ENCODE measurements at regions of chr22 and their contacts with region 1.

Region 1: DNA sequence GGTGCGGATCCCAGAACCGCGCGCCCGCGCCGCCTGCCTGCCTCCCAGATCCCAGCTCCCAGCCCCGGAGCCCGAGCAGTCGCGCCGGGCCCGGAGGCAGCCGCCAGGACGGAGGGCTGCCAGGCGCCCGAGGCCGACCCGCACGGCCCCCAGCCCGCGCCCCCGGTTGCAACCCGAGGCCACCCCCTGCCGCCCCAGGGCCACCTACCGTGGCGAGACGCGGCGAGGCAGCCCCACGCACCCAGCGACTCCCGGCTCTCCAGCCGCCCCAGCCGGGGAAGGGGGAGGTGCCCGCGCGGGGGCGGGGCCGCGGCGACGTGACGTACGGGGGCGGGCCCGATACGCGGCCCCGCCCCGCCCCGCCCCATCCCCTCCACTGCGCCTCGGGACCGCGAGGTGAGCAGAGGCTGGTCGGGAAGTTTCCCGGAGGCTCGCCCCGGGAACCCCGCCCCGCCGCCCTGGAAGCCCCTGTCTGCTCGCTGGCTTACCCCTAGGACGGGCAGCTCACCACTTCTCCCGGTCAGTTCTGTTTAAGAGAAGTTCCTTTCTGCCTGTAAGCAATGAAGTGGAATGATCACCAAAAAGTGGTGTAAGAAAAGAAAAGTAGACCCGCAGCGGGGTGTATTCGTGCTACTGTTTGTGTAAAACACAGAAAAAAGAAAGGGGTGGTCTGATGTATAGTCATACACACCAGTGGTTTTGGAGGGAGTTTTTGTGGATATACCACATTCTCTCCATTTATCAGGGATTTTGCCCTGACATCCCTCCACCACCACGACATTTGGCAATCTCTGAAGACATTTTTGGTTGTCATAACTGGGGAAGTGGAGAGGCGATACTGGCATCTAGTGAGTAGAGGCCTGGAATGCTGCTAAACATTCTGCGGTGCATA is at the start of gene TPST2:
- DNase-seq: peak; percentile 94
- H3K4me3 Mint-ChIP-seq: peak within 1 kb of the TSS; percentile 95
- H3K27ac Mint-ChIP-seq: peak within 1 kb of the TSS; percentile 90
- H3K4me1 Mint-ChIP-seq: peaks cover 66% of the 10 kb centered on the region
- H3K27me3 Mint-ChIP-seq: no peaks in the 10 kb centered on the region
- total RNA-seq, gene TPST2: 30.0 and 33.5 TPM in 2 replicates

Region 2: GRCh38 chr22:26511857-26512793 is 78.0 kb before region 1 on chr22 and contains the start of gene TFIP11:
- intact Hi-C with region 1: loop called (anchors 2 kb)
- DNase-seq: peak; percentile 99
- H3K4me3 Mint-ChIP-seq: peak within 1 kb of the TSS; percentile 100
- H3K27ac Mint-ChIP-seq: peak within 1 kb of the TSS; percentile 97
- H3K4me1 Mint-ChIP-seq: peaks cover 41% of the 10 kb centered on the region
- H3K27me3 Mint-ChIP-seq: no peaks in the 10 kb centered on the region
- total RNA-seq, gene TFIP11: 51.2 and 56.3 TPM in 2 replicates

Region 3: GRCh38 chr22:26542831-26543230 is 47.3 kb before region 1 on chr22:
- intact Hi-C with region 1: loop called (anchors 5 kb)
- DNase-seq: peak; percentile 76
- H3K4me3 Mint-ChIP-seq: no peak overlapping the region
- H3K27ac Mint-ChIP-seq: peak overlapping the region; percentile 85
- H3K4me1 Mint-ChIP-seq: peaks cover 40% of the 10 kb centered on the region
- H3K27me3 Mint-ChIP-seq: no peaks in the 10 kb centered on the region

Region 4: GRCh38 chr22:26579331-26579886 is 10.7 kb before region 1 on chr22:
- intact Hi-C with region 1: loop called (anchors 1 kb)
- DNase-seq: peak; percentile 91
- H3K4me3 Mint-ChIP-seq: peak overlapping the region; percentile 75
- H3K27ac Mint-ChIP-seq: peak overlapping the region; percentile 87
- H3K4me1 Mint-ChIP-seq: peaks cover 47% of the 10 kb centered on the region
- H3K27me3 Mint-ChIP-seq: no peaks in the 10 kb centered on the region

Region 5: DNA sequence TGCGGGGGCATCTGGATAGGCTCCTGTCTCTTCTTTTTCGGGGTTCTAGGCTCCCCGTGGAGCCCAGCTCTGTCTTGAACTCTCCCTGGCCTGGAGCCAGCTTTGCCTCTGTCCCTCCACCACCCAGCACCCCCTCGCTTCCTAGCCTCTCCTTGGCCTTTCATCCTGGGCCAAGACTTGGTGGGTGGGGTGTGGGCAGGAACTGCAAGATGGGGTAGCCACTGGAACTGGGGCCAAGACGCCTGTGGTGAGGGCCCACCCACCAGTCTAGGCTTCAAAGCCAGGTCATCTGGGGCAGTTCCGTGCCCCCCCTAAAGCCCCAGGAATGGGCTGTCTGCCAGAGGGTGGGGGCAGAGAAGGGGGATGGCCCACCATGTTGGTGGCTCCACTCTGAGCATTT is 29.4 kb after region 1 on chr22:
- intact Hi-C with region 1: no loop called
- DNase-seq: no peak
- H3K4me3 Mint-ChIP-seq: no peak overlapping the region
- H3K27ac Mint-ChIP-seq: no peak overlapping the region
- H3K4me1 Mint-ChIP-seq: peaks cover 14% of the 10 kb centered on the region
- H3K27me3 Mint-ChIP-seq: peaks cover 3% of the 10 kb centered on the region